Dorsolateral prefrontal cortex (tissue), 120 donors: ENCODE measurements at regions of chr3 and their contacts with region 1.

Region 1: DNA sequence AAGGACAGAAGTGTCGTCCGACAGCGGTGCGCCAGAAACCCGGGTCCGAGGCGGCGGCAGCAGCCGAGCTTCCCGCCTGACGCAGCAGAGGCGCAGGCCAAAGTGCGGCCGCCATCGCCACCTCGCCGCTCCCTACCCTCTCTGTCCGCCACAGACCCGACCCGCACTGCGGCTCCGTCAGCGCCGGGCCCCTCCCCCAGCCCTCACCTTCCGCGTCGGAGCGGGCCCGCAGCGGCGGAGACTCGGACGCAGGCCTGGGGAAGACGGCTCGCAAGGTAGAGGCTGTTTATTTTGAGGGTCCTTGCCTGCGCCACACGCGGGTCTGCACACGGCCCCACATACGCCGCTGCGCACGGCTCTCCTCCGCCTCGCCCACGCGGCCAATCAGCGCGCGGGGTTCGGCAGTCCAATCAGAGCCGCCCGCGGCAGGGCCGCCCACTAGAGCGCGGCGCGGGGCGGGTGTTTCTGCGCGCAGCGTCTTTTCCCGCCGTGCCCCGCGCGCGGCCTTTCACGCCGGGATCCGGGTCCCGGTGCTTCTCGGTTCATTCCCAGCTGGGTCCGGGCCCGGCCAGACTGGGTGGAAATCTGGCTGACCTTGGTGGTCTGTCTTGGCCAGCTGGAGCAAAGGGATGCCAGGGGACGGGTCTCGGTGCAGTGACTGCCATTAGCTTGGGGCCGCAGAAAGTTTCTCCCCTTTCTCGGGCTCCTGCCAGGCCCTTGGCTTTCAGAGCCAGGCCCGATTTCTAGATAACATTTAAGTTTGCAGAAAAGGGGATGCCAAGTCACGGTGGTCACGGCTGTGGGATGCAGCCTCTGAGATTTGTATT is at the start of gene CNBP:
- DNase-seq: peak; percentile 83 to 96 (median 93)
- H3K4me3 ChIP-seq: peak within 1 kb of the TSS; percentile 77 to 100 (median 98)
- H3K27ac ChIP-seq: peak within 1 kb of the TSS; percentile 76 to 99 (median 97)
- H3K27me3 ChIP-seq: no peaks in the 10 kb centered on the region
- CTCF ChIP-seq: peak in 34 of 56 donors; percentile 7 to 61 (median 25)
- total RNA-seq, gene CNBP: 173 to 277 (median 229) TPM

Region 2: DNA sequence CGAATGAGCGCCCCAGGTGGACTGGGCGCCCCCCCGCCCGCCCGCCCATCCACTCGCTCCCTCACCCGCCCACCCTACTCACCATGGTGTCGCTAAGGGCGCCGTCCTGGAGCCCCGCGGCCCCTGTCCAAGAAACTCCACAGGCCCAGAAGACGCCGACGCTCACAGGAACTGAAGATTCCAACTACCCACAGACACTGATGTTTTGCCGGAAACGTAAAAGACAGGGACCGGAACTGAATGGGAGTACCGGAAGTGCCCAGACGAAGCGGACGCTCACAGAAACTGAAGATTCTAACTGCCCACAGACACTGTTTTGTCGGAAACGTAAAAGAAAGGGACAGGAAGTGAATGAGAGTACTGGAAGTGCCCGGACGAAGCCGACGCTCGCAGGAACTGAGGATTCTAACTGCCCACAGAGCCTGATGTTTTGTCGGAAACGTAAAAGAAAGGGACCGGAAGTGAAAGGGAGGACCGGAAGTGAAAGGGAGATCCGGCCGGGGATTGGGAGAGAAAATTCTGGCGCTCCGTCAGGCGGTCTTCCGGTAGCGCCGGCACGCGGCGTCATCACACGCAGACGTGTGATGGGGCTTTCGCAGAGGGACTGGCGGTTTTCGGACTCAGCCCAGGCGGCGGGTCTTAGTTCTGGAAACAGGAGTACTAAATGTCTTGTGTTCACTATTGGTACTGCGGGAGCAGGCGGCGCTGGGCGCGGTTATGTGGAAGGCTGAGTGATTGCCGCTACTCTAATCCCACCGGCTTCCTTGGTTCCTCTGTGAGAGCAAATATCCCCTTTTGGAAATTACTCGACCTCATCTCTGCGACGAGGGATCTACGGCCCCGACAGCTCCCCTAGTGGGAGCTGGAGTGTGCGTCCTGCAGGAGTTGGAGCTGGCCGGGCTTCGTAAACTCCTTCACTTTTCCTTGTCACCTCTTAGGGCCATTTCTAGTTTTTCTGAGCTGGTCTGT is 22.6 kb before region 1 on chr3 and contains the start of gene ISY1:
- intact Hi-C with region 1: loop called (anchors 1 kb)
- DNase-seq: peak; percentile 65 to 90 (median 88)
- H3K4me3 ChIP-seq: peak within 1 kb of the TSS; percentile 57 to 99 (median 90)
- H3K27ac ChIP-seq: peak within 1 kb of the TSS; percentile 76 to 99 (median 97)
- H3K27me3 ChIP-seq: no peaks in the 10 kb centered on the region
- CTCF ChIP-seq: peak in 52 of 56 donors; percentile 26 to 76 (median 54)
- total RNA-seq, gene ISY1: 9.5 to 31.1 (median 20.5) TPM